Left ventricle myocardium inferior (tissue), 1 donor: ENCODE measurements at regions of chr1 and their contacts with region 1.

Region 1: GRCh38 chr1:16009030-16009709 is 5.1 kb downstream of the SRARP start:
- DNase-seq: peak; percentile 79
- H3K4me3 ChIP-seq: no peak overlapping the region
- H3K27ac ChIP-seq: no peak overlapping the region
- H3K4me1 ChIP-seq: peaks cover 23% of the 10 kb centered on the region
- H3K27me3 ChIP-seq: no peaks in the 10 kb centered on the region
- CTCF ChIP-seq: peak; percentile 97

Region 2: GRCh38 chr1:16053781-16054502 is 44.8 kb after region 1 on chr1:
- intact Hi-C with region 1: loop called (anchors 5 kb)
- DNase-seq: no peak
- H3K4me3 ChIP-seq: no peak overlapping the region
- H3K27ac ChIP-seq: no peak overlapping the region
- H3K4me1 ChIP-seq: peaks cover 20% of the 10 kb centered on the region
- H3K27me3 ChIP-seq: peaks cover 4% of the 10 kb centered on the region
- CTCF ChIP-seq: no peak